ENCODE measurements at regions of chr4 and their contacts with region 1.

Region 1: GRCh38 chr4:138182838-138183426 is 59.2 kb downstream of the SLC7A11 start:
- DNase-seq: no peak
- H3K4me3 ChIP-seq: no peak overlapping the region
- H3K27ac ChIP-seq: no peak overlapping the region
- H3K4me1 ChIP-seq: peaks cover 0 to 19% (median 0%) of the 10 kb centered on the region in 4 donors
- H3K27me3 ChIP-seq: no peaks in the 10 kb centered on the region
- CTCF ChIP-seq: peak; percentile 70 to 71

Region 2: GRCh38 chr4:138680989-138681604 is 498.2 kb after region 1 on chr4:
- intact Hi-C with region 1: loop called (anchors 5 kb)
- DNase-seq: peak; percentile 68 to 88
- H3K4me3 ChIP-seq: no peak overlapping the region
- H3K27ac ChIP-seq: no peak overlapping the region
- H3K4me1 ChIP-seq: peaks cover 0 to 29% (median 10%) of the 10 kb centered on the region in 4 donors
- H3K27me3 ChIP-seq: no peaks in the 10 kb centered on the region
- CTCF ChIP-seq: peak; percentile 85 to 88

Measured in tibial artery (tissue), 4 donors.